ENCODE measurements at regions of chr10 and their contacts with region 1.

Region 1: DNA sequence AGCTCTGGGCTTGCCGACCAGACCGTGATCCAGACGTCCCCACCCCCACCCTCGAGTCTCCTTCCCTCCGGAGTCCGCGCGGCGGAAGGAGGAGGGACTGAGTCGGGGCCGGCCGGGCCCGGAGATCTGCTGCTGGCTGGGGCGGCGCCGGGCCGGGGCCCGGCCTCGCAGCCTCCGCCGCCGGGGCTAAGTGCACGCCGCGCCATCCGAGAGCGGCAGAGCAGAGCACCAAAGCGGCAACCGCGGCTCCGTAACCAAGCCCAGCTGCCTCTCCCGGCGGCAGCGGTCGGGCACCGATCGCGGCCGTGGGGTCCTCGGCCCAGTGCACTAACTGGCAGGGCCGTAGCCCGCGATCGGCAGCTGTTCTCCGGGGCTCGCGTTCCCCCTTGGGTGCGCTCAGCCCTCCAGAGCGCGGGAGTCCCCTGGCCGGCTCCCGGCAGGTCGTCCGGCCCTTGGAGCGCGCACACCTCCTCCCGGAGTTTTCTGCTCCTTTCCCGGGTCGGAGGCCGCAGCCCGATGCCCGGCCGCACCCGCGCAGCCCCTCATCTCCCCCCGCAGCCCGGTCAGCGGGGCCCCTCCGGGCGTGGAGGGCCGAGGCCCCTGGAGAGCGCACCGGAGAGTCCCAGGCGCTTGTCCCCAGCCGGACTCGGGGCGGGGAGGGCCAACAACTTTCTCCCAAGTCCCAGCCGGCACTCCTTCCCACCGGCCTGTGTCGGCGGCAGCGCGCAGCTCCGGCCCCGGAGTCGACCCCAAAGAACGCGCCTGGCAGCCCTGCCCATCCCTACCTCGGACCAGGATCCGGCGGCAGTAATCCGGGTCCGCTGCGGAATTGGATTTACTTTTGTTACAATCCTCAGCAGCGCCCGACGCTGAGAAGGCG is 799 bp downstream of the VAX1 start:
- DNase-seq: no peak
- H3K4me3 Mint-ChIP-seq: no peak overlapping the region
- H3K27ac Mint-ChIP-seq: no peak overlapping the region
- H3K4me1 Mint-ChIP-seq: peaks cover 2% of the 10 kb centered on the region
- H3K27me3 Mint-ChIP-seq: peaks cover 69% of the 10 kb centered on the region

Region 2: GRCh38 chr10:116044801-116045248 is 1092.4 kb before region 1 on chr10:
- intact Hi-C with region 1: no loop called
- DNase-seq: no peak
- H3K4me3 Mint-ChIP-seq: no peak overlapping the region
- H3K27ac Mint-ChIP-seq: no peak overlapping the region
- H3K4me1 Mint-ChIP-seq: no peaks in the 10 kb centered on the region
- H3K27me3 Mint-ChIP-seq: no peaks in the 10 kb centered on the region

Region 3: GRCh38 chr10:116272440-116273283 is 864.6 kb before region 1 on chr10 and contains the start of gene GFRA1:
- intact Hi-C with region 1: loop called (anchors 10 kb)
- DNase-seq: no peak
- H3K4me3 Mint-ChIP-seq: no peak within 1 kb of the TSS
- H3K27ac Mint-ChIP-seq: no peak within 1 kb of the TSS
- H3K4me1 Mint-ChIP-seq: peaks cover 6% of the 10 kb centered on the region
- H3K27me3 Mint-ChIP-seq: peaks cover 66% of the 10 kb centered on the region
- total RNA-seq, gene GFRA1: not detected in 2 replicates

Region 4: DNA sequence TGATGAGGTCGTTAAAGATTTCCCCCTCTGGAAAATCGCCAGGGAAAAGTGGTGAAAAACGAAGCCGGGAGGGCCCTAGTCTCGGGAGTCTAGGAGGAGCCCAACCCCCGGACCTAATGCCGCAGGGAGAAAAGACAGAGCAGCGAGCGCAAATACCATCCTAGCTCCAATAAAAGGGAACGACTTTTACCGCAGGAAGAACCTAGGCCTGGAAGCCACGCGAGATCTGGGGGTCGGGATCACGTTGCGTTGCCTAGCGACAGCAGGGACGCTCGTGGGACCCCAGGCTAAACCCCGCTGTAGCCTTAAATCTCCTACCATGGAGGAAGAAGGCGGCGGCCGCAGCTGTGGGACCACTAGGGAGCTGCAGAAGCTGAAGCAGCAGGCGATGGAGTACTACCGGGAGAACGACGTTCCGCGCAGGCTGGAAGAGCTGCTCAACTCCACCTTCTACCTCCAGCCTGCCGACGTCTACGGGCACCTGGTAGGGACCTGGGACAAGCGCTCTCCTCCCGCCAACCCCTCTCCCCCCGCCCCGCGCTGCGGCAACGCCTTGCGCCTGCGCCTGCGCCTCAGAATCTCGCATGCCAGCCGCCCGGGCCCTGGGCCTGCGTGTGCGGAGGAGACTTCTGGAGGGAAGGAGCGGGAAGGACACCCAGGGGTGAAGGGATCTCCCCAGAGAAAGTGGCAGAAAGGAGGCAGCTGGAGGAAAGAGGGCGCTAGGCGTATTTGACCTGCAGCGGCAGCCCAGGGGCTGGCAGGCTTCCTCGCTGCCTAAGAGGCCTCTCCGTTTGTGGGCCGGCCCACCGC is 287.8 kb before region 1 on chr10 and contains the start of gene ENO4:
- intact Hi-C with region 1: loop called (anchors 10 kb)
- DNase-seq: no peak
- H3K4me3 Mint-ChIP-seq: no peak within 1 kb of the TSS
- H3K27ac Mint-ChIP-seq: no peak within 1 kb of the TSS
- H3K4me1 Mint-ChIP-seq: no peaks in the 10 kb centered on the region
- H3K27me3 Mint-ChIP-seq: peaks cover 51% of the 10 kb centered on the region
- total RNA-seq, gene ENO4: not detected in 2 replicates

Region 5: GRCh38 chr10:117472872-117473271 is 335.6 kb after region 1 on chr10:
- intact Hi-C with region 1: no loop called
- DNase-seq: no peak
- H3K4me3 Mint-ChIP-seq: no peak overlapping the region
- H3K27ac Mint-ChIP-seq: no peak overlapping the region
- H3K4me1 Mint-ChIP-seq: no peaks in the 10 kb centered on the region
- H3K27me3 Mint-ChIP-seq: peaks cover 3% of the 10 kb centered on the region

Region 6: GRCh38 chr10:117545141-117546019 is 408.1 kb after region 1 on chr10:
- intact Hi-C with region 1: loop called (anchors 2 kb)
- DNase-seq: no peak
- H3K4me3 Mint-ChIP-seq: no peak overlapping the region
- H3K27ac Mint-ChIP-seq: peak overlapping the region; percentile 22
- H3K4me1 Mint-ChIP-seq: peaks cover 4% of the 10 kb centered on the region
- H3K27me3 Mint-ChIP-seq: peaks cover 79% of the 10 kb centered on the region

Region 7: GRCh38 chr10:118241229-118242137 is 1104.2 kb after region 1 on chr10:
- intact Hi-C with region 1: loop called (anchors 10 kb)
- DNase-seq: peak; percentile 43
- H3K4me3 Mint-ChIP-seq: no peak overlapping the region
- H3K27ac Mint-ChIP-seq: no peak overlapping the region
- H3K4me1 Mint-ChIP-seq: no peaks in the 10 kb centered on the region
- H3K27me3 Mint-ChIP-seq: peaks cover 26% of the 10 kb centered on the region

Measured in activated T-helper 2 cell treated with anti-CD3 and anti-CD28 coated beads, Interferon-gamma antibody, Interleukin-2, Interleukin-4, amounts not matched to agents 10 μg/mL and 5 μg/mL and 100 μg/mL, durations not matched to agents 14 hours and 24 hours and 36 hours (primary cell).